ENCODE measurements at regions of chr15 and their contacts with region 1.

Region 1: GRCh38 chr15:92355307-92355706 is 38.4 kb upstream of the ST8SIA2 start:
- DNase-seq: no peak
- ATAC-seq: no peak
- H3K4me3 ChIP-seq: no peak overlapping the region
- H3K4me3 Mint-ChIP-seq: no peak overlapping the region
- H3K27ac ChIP-seq: no peak overlapping the region
- H3K27ac Mint-ChIP-seq: no peak overlapping the region
- H3K4me1 ChIP-seq: no peaks in the 10 kb centered on the region
- H3K4me1 Mint-ChIP-seq: no peaks in the 10 kb centered on the region
- H3K27me3 ChIP-seq: peaks cover 0 to 4% of the 10 kb centered on the region in 2 experiments
- H3K27me3 Mint-ChIP-seq: peaks cover 9% of the 10 kb centered on the region
- CTCF ChIP-seq: no peak

Region 2: GRCh38 chr15:91291673-91292072 is 1063.6 kb before region 1 on chr15:
- CTCF ChIA-PET with region 1: no interaction called
- POLR2A ChIA-PET with region 1: no interaction called
- intact Hi-C with region 1: loop called in 1 of 2 experiments (anchors 5 kb)
- DNase-seq: peak in 2 of 9 experiments; percentile 38 to 50
- ATAC-seq: no peak
- H3K4me3 ChIP-seq: no peak overlapping the region
- H3K4me3 Mint-ChIP-seq: no peak overlapping the region
- H3K27ac ChIP-seq: no peak overlapping the region
- H3K27ac Mint-ChIP-seq: no peak overlapping the region
- H3K4me1 ChIP-seq: no peaks in the 10 kb centered on the region
- H3K4me1 Mint-ChIP-seq: no peaks in the 10 kb centered on the region
- H3K27me3 ChIP-seq: peaks cover 0 to 2% of the 10 kb centered on the region in 2 experiments
- H3K27me3 Mint-ChIP-seq: peaks cover 2% of the 10 kb centered on the region
- CTCF ChIP-seq: no peak

Region 3: DNA sequence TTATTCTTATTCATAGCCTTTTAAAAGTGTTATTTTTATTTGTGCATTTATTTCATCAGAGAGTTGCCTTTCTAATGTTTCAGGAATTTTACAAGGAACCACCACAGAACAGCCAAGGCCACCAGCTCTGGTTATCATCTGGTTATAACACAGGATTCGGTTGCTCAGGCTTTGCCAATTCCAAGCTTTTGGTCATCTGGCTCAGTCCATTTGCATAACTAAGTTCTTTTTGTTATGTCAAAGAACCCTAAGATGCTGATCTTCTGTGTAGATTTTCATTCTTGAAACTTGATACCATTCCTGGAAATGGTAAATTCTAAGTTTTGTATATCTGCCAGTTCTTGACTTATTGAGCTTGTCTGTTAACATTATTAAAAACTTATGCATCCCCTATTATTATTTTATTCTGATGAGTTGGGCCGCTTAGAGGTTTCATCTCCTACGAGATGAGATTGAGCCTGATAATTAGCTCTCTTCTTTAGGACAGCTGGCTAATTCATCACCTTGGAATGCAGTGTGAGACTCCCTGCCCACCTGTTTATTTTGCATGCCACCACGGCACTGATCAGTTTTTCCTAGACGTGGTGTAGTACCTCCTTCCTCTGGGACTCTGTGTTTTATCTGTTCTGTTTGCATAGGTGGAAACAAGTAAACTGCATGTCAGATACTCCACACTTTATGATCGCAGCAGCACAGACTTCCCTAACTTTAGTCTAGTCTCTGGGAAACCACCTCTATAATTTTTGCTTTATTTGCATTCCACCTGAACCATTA is 237.0 kb before region 1 on chr15:
- CTCF ChIA-PET with region 1: no interaction called
- POLR2A ChIA-PET with region 1: no interaction called
- intact Hi-C with region 1: no loop called
- DNase-seq: no peak
- ATAC-seq: no peak
- H3K4me3 ChIP-seq: no peak overlapping the region
- H3K4me3 Mint-ChIP-seq: no peak overlapping the region
- H3K27ac ChIP-seq: no peak overlapping the region
- H3K27ac Mint-ChIP-seq: no peak overlapping the region
- H3K4me1 ChIP-seq: no peaks in the 10 kb centered on the region
- H3K4me1 Mint-ChIP-seq: no peaks in the 10 kb centered on the region
- H3K27me3 ChIP-seq: no peaks in the 10 kb centered on the region
- H3K27me3 Mint-ChIP-seq: no peaks in the 10 kb centered on the region
- CTCF ChIP-seq: no peak

Region 4: DNA sequence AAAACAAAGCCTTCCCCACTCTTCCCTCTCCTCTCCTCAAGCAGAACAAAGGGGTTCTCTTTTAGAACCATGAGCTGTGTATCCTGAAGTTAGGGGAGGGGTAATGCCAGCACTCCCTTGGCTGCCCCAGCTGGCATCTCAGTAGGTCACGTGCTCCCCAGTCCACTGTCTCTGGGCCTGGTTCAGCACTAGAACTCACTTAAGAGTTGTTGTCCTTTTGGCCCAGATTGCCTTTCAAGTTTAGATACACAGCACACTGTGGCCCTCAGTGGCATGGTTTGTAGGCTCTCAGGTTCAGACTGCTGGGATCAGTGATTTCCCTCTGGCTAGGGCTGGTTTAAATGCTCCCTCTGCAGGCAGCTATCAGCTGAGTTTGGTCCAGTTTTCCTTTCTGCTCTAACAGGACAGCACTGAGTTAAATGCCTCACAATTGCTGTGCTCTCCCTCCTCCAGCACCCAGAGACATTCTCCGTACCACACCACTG is 150.0 kb before region 1 on chr15:
- CTCF ChIA-PET with region 1: no interaction called
- POLR2A ChIA-PET with region 1: no interaction called
- intact Hi-C with region 1: no loop called
- DNase-seq: no peak
- ATAC-seq: no peak
- H3K4me3 ChIP-seq: no peak overlapping the region
- H3K4me3 Mint-ChIP-seq: no peak overlapping the region
- H3K27ac ChIP-seq: no peak overlapping the region
- H3K27ac Mint-ChIP-seq: no peak overlapping the region
- H3K4me1 ChIP-seq: no peaks in the 10 kb centered on the region
- H3K4me1 Mint-ChIP-seq: no peaks in the 10 kb centered on the region
- H3K27me3 ChIP-seq: no peaks in the 10 kb centered on the region
- H3K27me3 Mint-ChIP-seq: peaks cover 28% of the 10 kb centered on the region
- CTCF ChIP-seq: no peak

Region 5: GRCh38 chr15:92283813-92284212 is 71.5 kb before region 1 on chr15:
- CTCF ChIA-PET with region 1: no interaction called
- POLR2A ChIA-PET with region 1: no interaction called
- intact Hi-C with region 1: no loop called
- DNase-seq: no peak
- ATAC-seq: no peak
- H3K4me3 ChIP-seq: no peak overlapping the region
- H3K4me3 Mint-ChIP-seq: no peak overlapping the region
- H3K27ac ChIP-seq: no peak overlapping the region
- H3K27ac Mint-ChIP-seq: no peak overlapping the region
- H3K4me1 ChIP-seq: no peaks in the 10 kb centered on the region
- H3K4me1 Mint-ChIP-seq: peaks cover 2% of the 10 kb centered on the region
- H3K27me3 ChIP-seq: no peaks in the 10 kb centered on the region
- H3K27me3 Mint-ChIP-seq: peaks cover 6% of the 10 kb centered on the region
- CTCF ChIP-seq: no peak

Region 6: GRCh38 chr15:93074599-93074998 is 719.3 kb after region 1 on chr15:
- CTCF ChIA-PET with region 1: no interaction called
- POLR2A ChIA-PET with region 1: no interaction called
- intact Hi-C with region 1: no loop called
- DNase-seq: no peak
- ATAC-seq: no peak
- H3K4me3 ChIP-seq: no peak overlapping the region
- H3K4me3 Mint-ChIP-seq: no peak overlapping the region
- H3K27ac ChIP-seq: no peak overlapping the region
- H3K27ac Mint-ChIP-seq: no peak overlapping the region
- H3K4me1 ChIP-seq: peaks cover 12% of the 10 kb centered on the region
- H3K4me1 Mint-ChIP-seq: peaks cover 12% of the 10 kb centered on the region
- H3K27me3 ChIP-seq: peaks cover 0 to 9% of the 10 kb centered on the region in 2 experiments
- H3K27me3 Mint-ChIP-seq: peaks cover 62% of the 10 kb centered on the region
- CTCF ChIP-seq: no peak

Measured in CD8-positive, alpha-beta T cell (primary cell).